BJ (cell line): ENCODE measurements at regions of chr9 and their contacts with region 1.

Region 1: GRCh38 chr9:83649080-83649479 is 26.1 kb downstream of the IDNK start:
- DNase-seq: no peak
- H3K4me3 ChIP-seq: no peak overlapping the region
- H3K27me3 ChIP-seq: no peaks in the 10 kb centered on the region
- CTCF ChIP-seq: peak; percentile 84

Region 2: GRCh38 chr9:83622939-83623678 is 26.0 kb before region 1 on chr9 and contains the start of gene IDNK:
- CTCF ChIA-PET with region 1: interaction called, 15 read pairs
- POLR2A ChIA-PET with region 1: no interaction called
- DNase-seq: no peak
- H3K4me3 ChIP-seq: peak within 1 kb of the TSS; percentile 65
- H3K27me3 ChIP-seq: no peaks in the 10 kb centered on the region
- CTCF ChIP-seq: no peak
- polyA plus RNA-seq, gene IDNK: 2.7 and 3.5 TPM in 2 replicates

Region 3: GRCh38 chr9:83636813-83637212 is 12.3 kb before region 1 on chr9:
- CTCF ChIA-PET with region 1: interaction called, 40 read pairs
- POLR2A ChIA-PET with region 1: no interaction called
- DNase-seq: no peak
- H3K4me3 ChIP-seq: no peak overlapping the region
- H3K27me3 ChIP-seq: no peaks in the 10 kb centered on the region
- CTCF ChIP-seq: no peak

Region 4: GRCh38 chr9:83662933-83663332 is 13.9 kb after region 1 on chr9:
- CTCF ChIA-PET with region 1: interaction called, 21 read pairs
- POLR2A ChIA-PET with region 1: no interaction called
- DNase-seq: no peak
- H3K4me3 ChIP-seq: no peak overlapping the region
- H3K27me3 ChIP-seq: no peaks in the 10 kb centered on the region
- CTCF ChIP-seq: no peak

Region 5: DNA sequence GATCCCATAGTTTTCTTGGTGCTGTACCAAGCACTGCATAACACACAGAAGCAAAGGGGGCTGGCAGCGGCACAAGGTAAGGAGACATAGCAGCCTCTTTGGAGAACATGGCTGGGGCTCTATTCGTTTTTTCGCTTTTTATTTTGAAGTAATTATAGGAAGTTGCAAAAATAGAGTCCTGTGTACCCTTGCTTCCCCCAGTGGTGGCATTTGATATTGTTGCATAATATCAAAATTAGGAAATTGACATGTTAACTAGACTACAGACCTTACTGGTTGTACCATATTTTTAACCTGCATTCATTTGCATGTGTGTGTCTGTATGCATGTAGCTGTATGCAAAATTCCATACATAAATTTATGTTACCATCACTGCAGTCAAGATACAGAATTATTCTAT is 65.2 kb after region 1 on chr9:
- CTCF ChIA-PET with region 1: no interaction called
- POLR2A ChIA-PET with region 1: no interaction called
- DNase-seq: no peak
- H3K4me3 ChIP-seq: no peak overlapping the region
- H3K27me3 ChIP-seq: no peaks in the 10 kb centered on the region
- CTCF ChIP-seq: peak; percentile 39